ENCODE measurements at regions of chr18 and their contacts with region 1.

Region 1: DNA sequence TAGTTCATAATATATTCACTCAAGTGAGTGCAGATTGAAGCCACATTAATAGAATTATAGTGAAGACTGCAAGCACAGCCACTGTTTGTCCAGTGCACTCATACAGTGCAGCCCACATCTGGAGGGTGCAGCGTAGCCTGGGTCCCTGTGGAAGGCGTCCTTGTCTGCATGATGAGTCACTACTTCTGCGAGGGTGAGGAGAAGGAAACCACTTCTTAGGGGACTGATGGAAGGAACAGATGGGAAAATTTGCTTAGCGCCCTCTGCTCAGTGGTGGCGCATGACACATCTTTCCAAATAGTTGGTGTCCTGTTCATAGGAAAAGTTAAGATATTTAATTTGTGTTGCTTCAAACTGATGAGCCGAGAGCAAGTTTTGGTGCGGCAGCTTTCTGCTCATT is 330.4 kb upstream of the SMIM21 start:
- DNase-seq: no peak
- H3K4me3 ChIP-seq: no peak overlapping the region
- H3K27ac ChIP-seq: no peak overlapping the region
- H3K4me1 ChIP-seq: no peaks in the 10 kb centered on the region
- H3K27me3 ChIP-seq: no peaks in the 10 kb centered on the region
- CTCF ChIP-seq: no peak
- EP300 ChIP-seq: no peak
- POLR2A ChIP-seq: no peak

Region 2: DNA sequence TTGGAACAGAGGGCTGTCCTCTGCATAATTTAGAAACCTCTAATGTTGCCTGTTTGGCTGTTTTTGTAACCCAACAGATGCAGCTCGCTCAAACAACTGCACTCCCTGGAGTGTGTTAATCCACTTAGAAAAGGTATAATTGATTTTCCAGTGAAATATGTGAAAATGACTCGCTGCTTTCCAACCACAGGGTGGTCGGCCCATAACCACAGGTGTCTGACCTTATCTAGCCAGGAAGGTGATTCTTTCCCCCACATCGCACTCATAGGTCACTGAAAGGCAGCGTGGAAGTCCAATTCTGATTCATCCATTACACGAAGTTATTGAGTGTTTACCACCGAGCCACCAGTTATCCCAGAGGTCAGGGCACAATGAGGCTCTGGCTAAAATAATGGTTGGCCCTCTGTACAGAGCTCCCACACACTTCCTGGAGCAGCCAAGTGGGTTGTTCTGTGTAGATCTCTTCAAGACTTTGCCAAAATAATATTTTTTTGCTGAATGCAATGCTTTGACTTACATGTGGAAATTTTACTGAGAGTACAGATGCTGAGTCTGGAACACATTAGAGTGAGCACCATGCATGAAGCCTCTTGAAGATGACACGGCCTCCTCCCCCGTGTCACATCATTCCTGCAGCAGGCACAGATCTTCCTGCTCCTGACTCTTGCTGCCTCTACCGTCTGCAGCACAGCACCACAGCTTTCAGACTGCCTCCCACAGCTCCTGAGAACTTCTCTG is 340.9 kb after region 1 on chr18:
- in situ Hi-C with region 1: no loop called
- intact Hi-C with region 1: loop called (anchors 5 kb)
- DNase-seq: no peak
- H3K4me3 ChIP-seq: no peak overlapping the region
- H3K27ac ChIP-seq: no peak overlapping the region
- H3K4me1 ChIP-seq: no peaks in the 10 kb centered on the region
- H3K27me3 ChIP-seq: no peaks in the 10 kb centered on the region
- CTCF ChIP-seq: no peak
- EP300 ChIP-seq: no peak
- POLR2A ChIP-seq: no peak

Measured in transverse colon (tissue), 4 donors.